ENCODE measurements at regions of chr6 and their contacts with region 1.

Region 1: DNA sequence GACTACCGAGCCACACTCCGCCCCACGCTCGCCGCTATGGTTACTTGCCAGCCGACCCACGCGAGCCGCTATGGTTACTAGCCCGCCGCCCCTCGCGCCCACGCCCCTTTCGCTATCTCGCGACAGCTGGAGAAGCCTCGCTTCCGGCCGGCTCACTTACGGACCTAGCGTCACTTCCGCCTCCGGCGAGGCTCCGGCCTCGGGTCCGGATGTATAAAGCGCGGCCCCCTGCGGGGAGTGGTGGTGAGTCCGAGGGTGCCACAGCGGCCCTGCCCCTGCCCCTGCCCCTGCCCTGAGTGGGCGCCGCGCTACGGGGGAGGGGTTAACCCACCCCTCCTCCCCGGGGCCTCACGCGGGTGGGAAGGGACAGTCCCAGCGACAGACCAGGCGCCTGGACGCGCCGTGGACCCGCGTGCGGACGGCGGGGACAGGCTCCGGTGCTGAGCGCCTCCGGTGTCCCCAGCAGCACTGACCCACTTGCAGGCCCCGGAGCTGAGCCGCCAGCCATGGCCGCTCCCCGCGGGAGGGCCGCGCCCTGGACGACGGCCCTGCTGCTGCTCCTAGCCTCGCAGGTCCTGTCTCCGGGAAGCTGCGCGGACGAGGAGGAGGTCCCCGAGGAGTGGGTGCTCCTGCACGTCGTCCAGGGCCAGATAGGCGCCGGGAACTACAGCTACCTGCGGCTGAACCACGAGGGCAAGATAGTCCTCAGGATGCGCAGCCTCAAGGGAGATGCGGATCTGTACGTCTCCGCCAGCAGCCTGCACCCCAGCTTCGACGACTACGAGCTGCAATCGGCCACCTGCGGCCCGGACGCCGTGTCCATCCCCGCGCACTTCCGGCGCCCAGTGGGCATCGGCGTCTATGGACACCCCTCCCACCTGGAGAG is at the starts of genes C6orf120 and WDR27:
- DNase-seq: peak; percentile 92 to 98 (median 96)
- ATAC-seq: peak; percentile 85
- H3K4me3 ChIP-seq: peak within 1 kb of the TSS; percentile 83
- H3K4me3 Mint-ChIP-seq: peak within 1 kb of the TSS; percentile 98
- H3K27ac ChIP-seq: peak within 1 kb of the TSS; percentile 87 to 92
- H3K27ac Mint-ChIP-seq: peak within 1 kb of the TSS; percentile 99
- H3K4me1 ChIP-seq: peaks cover 21% of the 10 kb centered on the region
- H3K4me1 Mint-ChIP-seq: peaks cover 74% of the 10 kb centered on the region
- H3K27me3 ChIP-seq: no peaks in the 10 kb centered on the region
- H3K27me3 Mint-ChIP-seq: no peaks in the 10 kb centered on the region
- CTCF ChIP-seq: no peak
- total RNA-seq, gene C6orf120: 19.7 to 21.3 TPM
- total RNA-seq, gene WDR27: 22.0 to 23.5 TPM

Region 2: DNA sequence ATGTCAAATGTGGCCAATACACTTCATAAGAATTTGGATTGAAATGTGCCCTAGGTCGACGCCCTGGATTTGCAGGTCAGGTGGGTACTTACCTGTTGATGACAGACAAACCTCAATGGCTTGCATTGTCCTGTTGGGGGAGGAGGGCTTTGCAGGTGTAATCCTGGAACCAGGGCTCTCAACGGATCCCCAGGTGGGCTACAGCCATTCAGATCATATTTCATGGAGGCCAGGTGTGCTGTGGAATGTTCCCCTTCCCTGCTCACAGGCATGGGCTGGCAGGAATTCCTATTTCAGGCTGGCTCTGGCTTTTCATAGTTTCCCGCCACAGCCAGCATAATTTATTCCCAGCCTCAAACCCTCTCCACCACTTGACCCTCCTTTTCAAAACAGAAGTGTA is 1006.5 kb before region 1 on chr6:
- CTCF ChIA-PET with region 1: no interaction called
- POLR2A ChIA-PET with region 1: no interaction called
- intact Hi-C with region 1: no loop called
- DNase-seq: no peak
- ATAC-seq: no peak
- H3K4me3 ChIP-seq: no peak overlapping the region
- H3K4me3 Mint-ChIP-seq: no peak overlapping the region
- H3K27ac ChIP-seq: no peak overlapping the region
- H3K27ac Mint-ChIP-seq: no peak overlapping the region
- H3K4me1 ChIP-seq: no peaks in the 10 kb centered on the region
- H3K4me1 Mint-ChIP-seq: no peaks in the 10 kb centered on the region
- H3K27me3 ChIP-seq: no peaks in the 10 kb centered on the region
- H3K27me3 Mint-ChIP-seq: no peaks in the 10 kb centered on the region
- CTCF ChIP-seq: no peak

Region 3: GRCh38 chr6:169212897-169213813 is 489.0 kb before region 1 on chr6:
- CTCF ChIA-PET with region 1: no interaction called
- POLR2A ChIA-PET with region 1: interaction called, 8 read pairs
- intact Hi-C with region 1: loop called in 1 of 2 experiments (anchors 5 kb)
- DNase-seq: peak; percentile 77 to 95 (median 85)
- ATAC-seq: peak; percentile 98
- H3K4me3 ChIP-seq: peak overlapping the region; percentile 35
- H3K4me3 Mint-ChIP-seq: peak overlapping the region; percentile 78
- H3K27ac ChIP-seq: no peak overlapping the region
- H3K27ac Mint-ChIP-seq: peak overlapping the region; percentile 79
- H3K4me1 ChIP-seq: peaks cover 12% of the 10 kb centered on the region
- H3K4me1 Mint-ChIP-seq: peaks cover 25% of the 10 kb centered on the region
- H3K27me3 ChIP-seq: no peaks in the 10 kb centered on the region
- H3K27me3 Mint-ChIP-seq: no peaks in the 10 kb centered on the region
- CTCF ChIP-seq: no peak

Region 4: DNA sequence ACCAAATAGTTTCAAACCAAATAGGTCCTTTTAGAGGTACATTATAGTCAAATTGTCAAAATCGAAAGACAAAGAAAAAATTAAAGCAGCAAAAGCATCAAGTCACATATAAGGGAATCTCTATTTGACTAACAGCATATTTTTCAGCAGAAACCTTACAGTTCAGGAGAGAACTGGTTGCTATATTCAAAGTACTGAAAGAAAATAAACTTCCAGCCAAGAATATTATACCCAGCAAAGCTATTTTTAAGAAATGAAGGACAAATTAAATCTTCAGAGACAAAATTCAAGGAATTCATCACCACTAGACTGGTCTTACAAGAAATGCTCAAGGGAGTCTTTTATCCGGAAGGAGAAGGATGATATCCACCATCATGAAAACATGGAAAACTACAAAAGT is 16.3 kb before region 1 on chr6:
- CTCF ChIA-PET with region 1: no interaction called
- POLR2A ChIA-PET with region 1: no interaction called
- intact Hi-C with region 1: no loop called
- DNase-seq: no peak
- ATAC-seq: no peak
- H3K4me3 ChIP-seq: no peak overlapping the region
- H3K4me3 Mint-ChIP-seq: no peak overlapping the region
- H3K27ac ChIP-seq: no peak overlapping the region
- H3K27ac Mint-ChIP-seq: no peak overlapping the region
- H3K4me1 ChIP-seq: no peaks in the 10 kb centered on the region
- H3K4me1 Mint-ChIP-seq: no peaks in the 10 kb centered on the region
- H3K27me3 ChIP-seq: no peaks in the 10 kb centered on the region
- H3K27me3 Mint-ChIP-seq: no peaks in the 10 kb centered on the region
- CTCF ChIP-seq: no peak

Region 5: GRCh38 chr6:169723200-169723909 is 21.2 kb after region 1 on chr6:
- CTCF ChIA-PET with region 1: interaction called, 29 read pairs
- POLR2A ChIA-PET with region 1: interaction called, 230 read pairs
- intact Hi-C with region 1: loop called (anchors 1 to 2 kb)
- DNase-seq: peak; percentile 47 to 85 (median 64)
- ATAC-seq: peak; percentile 38
- H3K4me3 ChIP-seq: peak overlapping the region; percentile 79
- H3K4me3 Mint-ChIP-seq: peak overlapping the region; percentile 90
- H3K27ac ChIP-seq: peak overlapping the region; percentile 66 to 81
- H3K27ac Mint-ChIP-seq: peak overlapping the region; percentile 94
- H3K4me1 ChIP-seq: peaks cover 17% of the 10 kb centered on the region
- H3K4me1 Mint-ChIP-seq: peaks cover 58% of the 10 kb centered on the region
- H3K27me3 ChIP-seq: no peaks in the 10 kb centered on the region
- H3K27me3 Mint-ChIP-seq: no peaks in the 10 kb centered on the region
- CTCF ChIP-seq: no peak

Region 6: DNA sequence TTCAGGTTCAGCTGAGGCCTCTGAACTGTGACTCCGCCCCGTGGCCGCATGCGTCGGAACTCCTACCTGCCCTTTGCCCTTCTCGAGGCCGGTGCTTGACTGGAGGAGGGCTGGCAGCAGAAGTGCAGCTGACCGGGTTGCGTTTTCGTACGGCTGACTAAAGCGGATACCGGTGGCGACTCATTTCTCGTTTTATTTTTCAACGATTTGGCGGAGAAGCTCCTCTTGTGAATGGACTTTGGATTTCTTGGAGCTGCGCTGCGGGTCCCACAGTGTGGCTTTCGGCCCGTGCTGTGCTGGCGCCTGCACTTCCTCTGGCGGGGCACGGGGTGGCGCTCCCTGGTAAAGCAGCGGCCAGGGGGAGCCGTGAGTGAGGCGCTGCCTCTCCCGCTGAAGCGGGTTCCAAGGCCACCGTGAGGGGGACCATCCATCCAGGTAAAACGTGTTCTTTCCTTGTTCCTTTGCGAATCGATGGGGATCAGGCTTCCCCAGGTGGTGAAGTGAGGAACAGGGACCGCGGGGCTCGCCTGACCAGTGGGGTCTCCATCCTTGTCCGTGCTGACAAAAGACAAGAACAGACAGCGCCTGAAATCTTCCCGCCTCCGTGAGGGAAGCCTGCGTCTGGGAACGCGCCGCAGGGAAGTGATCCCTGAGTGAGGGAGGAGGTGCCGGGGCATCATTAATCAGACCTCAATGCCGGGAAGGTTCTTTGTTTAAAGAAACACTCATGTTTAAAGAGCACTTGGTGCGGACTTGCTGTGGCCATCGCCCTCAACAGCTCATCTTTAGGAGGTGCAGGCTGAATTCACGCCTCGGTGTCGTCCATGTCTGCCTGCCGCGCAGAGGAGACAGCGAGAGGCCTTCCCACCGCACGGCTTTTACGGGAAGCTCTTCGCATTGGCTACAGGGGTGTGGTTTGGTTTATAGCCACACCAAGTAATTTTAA is 88.1 kb after region 1 on chr6:
- CTCF ChIA-PET with region 1: interaction called, 11 read pairs
- POLR2A ChIA-PET with region 1: interaction called, 5 read pairs
- intact Hi-C with region 1: no loop called
- DNase-seq: peak; percentile 46 to 83 (median 67)
- ATAC-seq: peak; percentile 97
- H3K4me3 ChIP-seq: peak overlapping the region; percentile 70
- H3K4me3 Mint-ChIP-seq: peak overlapping the region; percentile 89
- H3K27ac ChIP-seq: no peak overlapping the region
- H3K27ac Mint-ChIP-seq: no peak overlapping the region
- H3K4me1 ChIP-seq: peaks cover 16% of the 10 kb centered on the region
- H3K4me1 Mint-ChIP-seq: peaks cover 18% of the 10 kb centered on the region
- H3K27me3 ChIP-seq: no peaks in the 10 kb centered on the region
- H3K27me3 Mint-ChIP-seq: peaks cover 39% of the 10 kb centered on the region
- CTCF ChIP-seq: peak; percentile 95

Region 7: DNA sequence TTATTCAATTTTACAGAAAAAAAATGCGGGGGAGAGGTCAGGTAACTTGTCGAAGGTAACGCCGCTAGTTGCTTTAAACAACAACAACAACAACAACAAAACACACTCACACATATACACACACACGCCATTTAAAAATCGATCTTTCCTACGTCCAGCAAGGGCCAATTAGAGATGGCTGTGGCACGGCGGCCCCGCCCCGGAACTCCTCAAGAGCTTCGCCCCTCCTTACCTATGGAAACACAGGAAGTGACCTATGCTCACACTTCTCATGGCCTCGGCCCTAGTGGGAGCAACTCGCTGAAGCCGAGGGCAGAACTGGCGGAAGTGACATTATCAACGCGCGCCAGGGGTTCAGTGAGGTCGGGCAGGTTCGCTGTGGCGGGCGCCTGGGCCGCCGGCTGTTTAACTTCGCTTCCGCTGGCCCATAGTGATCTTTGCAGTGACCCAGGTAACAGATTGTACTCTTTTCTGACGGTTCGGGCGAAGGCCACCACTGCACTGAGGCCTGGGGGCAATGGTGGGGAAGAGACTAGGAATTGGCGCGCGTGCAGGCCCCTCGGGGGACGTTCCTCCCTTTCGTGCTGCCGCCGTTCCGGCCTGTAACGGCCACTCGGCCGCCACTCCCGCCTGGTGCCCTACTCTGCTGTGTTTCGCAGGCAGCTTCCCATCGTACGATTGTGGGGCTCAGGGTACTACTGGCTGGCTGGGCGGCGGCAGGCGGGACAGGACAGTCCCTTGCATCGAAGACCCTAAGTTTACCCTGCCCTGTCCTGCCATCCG is 852.0 kb after region 1 on chr6 and contains the start of gene TBP:
- CTCF ChIA-PET with region 1: no interaction called
- POLR2A ChIA-PET with region 1: interaction called, 34 read pairs
- intact Hi-C with region 1: loop called in 1 of 2 experiments (anchors 1 kb)
- DNase-seq: peak; percentile 91 to 99 (median 96)
- ATAC-seq: peak; percentile 90
- H3K4me3 ChIP-seq: peak within 1 kb of the TSS; percentile 96
- H3K4me3 Mint-ChIP-seq: no peak within 1 kb of the TSS
- H3K27ac ChIP-seq: peak within 1 kb of the TSS; percentile 93
- H3K27ac Mint-ChIP-seq: no peak within 1 kb of the TSS
- H3K4me1 ChIP-seq: peaks cover 34% of the 10 kb centered on the region
- H3K4me1 Mint-ChIP-seq: peaks cover 27% of the 10 kb centered on the region
- H3K27me3 ChIP-seq: no peaks in the 10 kb centered on the region
- H3K27me3 Mint-ChIP-seq: no peaks in the 10 kb centered on the region
- CTCF ChIP-seq: no peak
- total RNA-seq, gene TBP: 12.6 to 14.1 TPM

Measured in CD4-positive, alpha-beta T cell (primary cell).